CD4-positive, alpha-beta T cell (primary cell): ENCODE measurements at regions of chr2 and their contacts with region 1.

Region 1: DNA sequence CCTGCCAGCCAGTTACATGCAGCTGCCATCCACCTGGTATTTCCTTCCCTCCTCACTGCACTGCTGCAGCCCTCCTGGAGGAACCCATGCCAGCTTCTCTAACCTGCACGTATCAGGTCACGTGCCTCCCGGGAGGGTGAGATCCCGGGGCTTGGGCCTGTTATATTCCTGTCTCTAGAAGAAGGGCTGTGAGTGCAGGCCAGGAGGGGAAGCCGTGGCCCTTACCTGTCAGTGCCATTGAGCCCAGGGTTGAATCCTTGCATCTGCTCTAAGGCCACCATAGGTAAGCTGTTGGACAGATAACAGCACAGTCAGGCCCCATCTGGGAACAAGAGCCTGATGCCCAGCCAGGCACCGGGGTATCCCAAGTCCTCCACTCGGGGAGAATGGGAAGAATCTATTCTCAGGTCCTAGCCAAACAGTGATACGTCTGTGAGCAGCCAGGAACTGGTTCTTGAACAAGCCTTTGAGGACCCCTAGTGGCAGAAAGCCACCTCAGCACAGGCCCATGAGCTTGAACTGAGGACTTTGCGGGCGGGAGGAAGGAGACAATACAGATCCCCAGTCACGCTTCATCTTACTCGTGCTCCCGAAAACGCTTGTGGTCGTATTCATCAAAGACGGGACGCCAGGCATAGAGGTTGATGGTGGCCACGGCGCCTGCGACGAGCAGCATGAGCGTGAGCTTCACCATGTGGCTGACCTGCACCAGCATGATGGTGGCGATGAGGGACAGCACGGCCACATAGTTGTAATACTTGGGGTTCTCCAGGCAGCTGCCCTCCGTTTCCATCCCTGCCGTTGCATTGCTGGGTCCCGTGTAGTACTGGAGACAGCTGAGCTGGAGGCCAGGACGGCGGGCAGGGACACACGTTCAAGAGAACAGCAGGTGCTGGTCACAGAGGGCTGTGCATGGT is 34.4 kb downstream of the CENPO start:
- DNase-seq: peak; percentile 57 to 86 (median 62)
- ATAC-seq: peak; percentile 93
- H3K4me3 ChIP-seq: no peak overlapping the region
- H3K4me3 Mint-ChIP-seq: no peak overlapping the region
- H3K27ac ChIP-seq: no peak overlapping the region
- H3K27ac Mint-ChIP-seq: no peak overlapping the region
- H3K4me1 ChIP-seq: peaks cover 15% of the 10 kb centered on the region
- H3K4me1 Mint-ChIP-seq: peaks cover 22% of the 10 kb centered on the region
- H3K27me3 ChIP-seq: no peaks in the 10 kb centered on the region
- H3K27me3 Mint-ChIP-seq: no peaks in the 10 kb centered on the region
- CTCF ChIP-seq: peak; percentile 80

Region 2: GRCh38 chr2:24421668-24422067 is 405.9 kb before region 1 on chr2:
- CTCF ChIA-PET with region 1: interaction called, 9 read pairs
- POLR2A ChIA-PET with region 1: interaction called, 4 read pairs
- intact Hi-C with region 1: loop called in 1 of 2 experiments (anchors 1 kb)
- DNase-seq: peak; percentile 23 to 70 (median 40)
- ATAC-seq: peak; percentile 37
- H3K4me3 ChIP-seq: no peak overlapping the region
- H3K4me3 Mint-ChIP-seq: no peak overlapping the region
- H3K27ac ChIP-seq: no peak overlapping the region
- H3K27ac Mint-ChIP-seq: no peak overlapping the region
- H3K4me1 ChIP-seq: no peaks in the 10 kb centered on the region
- H3K4me1 Mint-ChIP-seq: no peaks in the 10 kb centered on the region
- H3K27me3 ChIP-seq: no peaks in the 10 kb centered on the region
- H3K27me3 Mint-ChIP-seq: no peaks in the 10 kb centered on the region
- CTCF ChIP-seq: peak; percentile 42

Region 3: GRCh38 chr2:24597181-24597870 is 230.3 kb before region 1 on chr2:
- CTCF ChIA-PET with region 1: no interaction called
- POLR2A ChIA-PET with region 1: no interaction called
- intact Hi-C with region 1: loop called in 1 of 2 experiments (anchors 10 kb)
- DNase-seq: no peak
- ATAC-seq: no peak
- H3K4me3 ChIP-seq: no peak overlapping the region
- H3K4me3 Mint-ChIP-seq: no peak overlapping the region
- H3K27ac ChIP-seq: no peak overlapping the region
- H3K27ac Mint-ChIP-seq: no peak overlapping the region
- H3K4me1 ChIP-seq: no peaks in the 10 kb centered on the region
- H3K4me1 Mint-ChIP-seq: peaks cover 18% of the 10 kb centered on the region
- H3K27me3 ChIP-seq: no peaks in the 10 kb centered on the region
- H3K27me3 Mint-ChIP-seq: no peaks in the 10 kb centered on the region
- CTCF ChIP-seq: no peak

Region 4: DNA sequence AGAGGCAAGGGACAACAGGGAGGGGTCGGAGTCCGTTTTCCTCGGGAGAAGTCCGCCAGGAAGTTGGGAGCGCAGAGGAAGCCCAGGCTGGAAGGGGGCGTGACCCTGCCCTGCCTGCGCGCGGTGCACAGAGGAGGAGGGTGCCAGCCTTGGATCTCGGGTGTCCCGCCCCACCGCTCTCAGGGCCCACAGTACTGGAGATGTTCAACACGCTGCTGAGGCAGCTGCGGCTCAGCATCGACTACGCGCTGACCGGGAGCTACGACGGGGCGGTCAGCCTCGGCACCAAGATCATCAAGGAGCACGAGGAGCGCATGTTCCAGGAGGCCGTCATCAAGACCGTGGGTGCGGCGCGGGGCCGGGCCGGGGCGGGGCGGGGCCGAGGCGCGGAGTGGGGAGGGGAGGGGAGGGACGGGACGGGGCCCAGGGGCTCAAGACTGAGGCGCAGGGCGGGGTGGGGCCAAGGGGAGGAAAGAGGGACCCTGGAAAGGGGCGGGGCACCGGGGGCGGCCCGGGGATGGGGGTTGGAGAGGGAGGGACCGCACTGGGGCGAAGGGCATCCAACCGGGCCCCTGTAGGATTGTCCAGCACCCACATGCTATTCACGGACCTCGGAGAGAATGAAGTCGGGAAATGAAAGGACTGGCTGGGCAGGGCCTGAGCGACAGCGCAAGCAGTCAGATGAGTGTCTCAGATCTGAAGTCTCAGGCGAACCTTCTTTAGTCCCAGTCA is 304.2 kb after region 1 on chr2:
- CTCF ChIA-PET with region 1: interaction called, 3 read pairs
- POLR2A ChIA-PET with region 1: no interaction called
- intact Hi-C with region 1: loop called (anchors 2 kb)
- DNase-seq: peak in 5 of 14 experiments; percentile 3 to 30 (median 11)
- ATAC-seq: peak; percentile 62
- H3K4me3 ChIP-seq: peak overlapping the region; percentile 25
- H3K4me3 Mint-ChIP-seq: peak overlapping the region; percentile 76
- H3K27ac ChIP-seq: no peak overlapping the region
- H3K27ac Mint-ChIP-seq: no peak overlapping the region
- H3K4me1 ChIP-seq: peaks cover 15% of the 10 kb centered on the region
- H3K4me1 Mint-ChIP-seq: peaks cover 14% of the 10 kb centered on the region
- H3K27me3 ChIP-seq: peaks cover 38 to 58% of the 10 kb centered on the region in 2 experiments
- H3K27me3 Mint-ChIP-seq: peaks cover 63% of the 10 kb centered on the region
- CTCF ChIP-seq: no peak